HCT116 (cell line): ENCODE measurements at regions of chrX and their contacts with region 1.

Region 1: DNA sequence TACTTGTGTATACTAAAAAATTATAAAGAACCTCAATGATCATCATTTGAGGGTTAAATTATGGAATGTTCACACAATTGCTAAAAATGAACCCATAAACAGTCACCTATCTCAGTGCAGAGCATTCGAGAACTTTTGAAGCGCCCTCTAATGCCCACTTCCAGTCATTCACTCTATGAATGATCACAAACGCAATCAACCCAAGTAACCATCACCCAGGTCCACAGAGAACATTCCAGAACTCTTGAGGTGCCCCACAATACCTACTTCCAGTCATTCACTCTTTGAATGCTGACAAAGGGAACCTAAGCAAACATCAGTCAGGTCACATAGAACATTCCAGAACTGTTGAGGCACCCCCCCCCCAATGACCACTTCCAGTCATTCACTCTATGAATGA is 103.6 kb upstream of the PLAC1 start:
- DNase-seq: no peak
- ATAC-seq: peak; percentile 46; the same call in 1 of the 2 replicates
- H3K4me3 ChIP-seq: no peak overlapping the region
- H3K27ac ChIP-seq: no peak overlapping the region
- H3K4me1 ChIP-seq: peaks cover 2 to 5% of the 10 kb centered on the region in 2 experiments; a peak in 2 of 4 replicates
- H3K27me3 ChIP-seq: no peaks in the 10 kb centered on the region
- CTCF ChIP-seq: peak; percentile 11 to 50 (median 45); a peak in 5 of 6 replicates
- POLR2A ChIP-seq: no peak
- RAD21 ChIP-seq: peak; percentile 47; the same call in 1 of the 2 replicates

Region 2: DNA sequence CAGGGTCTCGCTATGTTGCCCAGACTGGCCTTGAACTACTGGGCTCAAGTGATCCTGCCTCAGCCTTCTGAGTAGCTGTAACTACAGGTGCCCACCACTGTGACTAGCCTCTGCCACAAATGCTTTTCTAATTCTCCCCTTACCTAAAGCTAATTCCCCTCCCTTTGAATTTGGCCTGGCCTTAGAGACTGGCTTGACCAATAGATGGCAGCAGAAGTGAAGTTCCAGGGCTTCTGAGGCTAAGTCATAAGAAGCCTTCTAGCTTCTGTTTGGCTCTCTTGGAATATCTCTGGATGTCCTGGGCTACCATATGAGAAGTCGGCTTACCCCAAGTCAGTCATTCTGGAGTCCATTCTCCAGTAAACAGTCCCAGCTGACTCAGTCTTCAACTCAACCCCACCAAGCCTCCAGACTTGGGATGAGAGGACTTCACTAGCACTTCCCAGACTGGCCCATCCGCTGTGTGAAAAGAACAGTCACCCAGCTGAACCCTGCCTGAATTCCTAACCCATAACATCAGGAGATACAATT is 240.9 kb before region 1 on chrX:
- CTCF ChIA-PET with region 1: interaction called, 6 read pairs
- POLR2A ChIA-PET with region 1: no interaction called
- RAD21 ChIA-PET with region 1: no interaction called
- intact Hi-C with region 1: loop called (anchors 2 kb)
- DNase-seq: peak; percentile 51
- ATAC-seq: peak; percentile 83
- H3K4me3 ChIP-seq: no peak overlapping the region
- H3K27ac ChIP-seq: no peak overlapping the region
- H3K4me1 ChIP-seq: peaks cover 6 to 12% of the 10 kb centered on the region in 2 experiments; a peak in 3 of 4 replicates
- H3K27me3 ChIP-seq: no peaks in the 10 kb centered on the region
- CTCF ChIP-seq: peak; percentile 53 to 61 (median 60); a peak in 5 of 6 replicates
- POLR2A ChIP-seq: no peak
- RAD21 ChIP-seq: peak; percentile 83